HEK293 (cell line): ENCODE measurements at regions of chr9 and their contacts with region 1.

Region 1: GRCh38 chr9:68584189-68585033 is 43.7 kb upstream of the TMEM252 start:
- H3K4me3 ChIP-seq: no peak overlapping the region
- H3K27ac ChIP-seq: no peak overlapping the region
- H3K4me1 ChIP-seq: no peaks in the 10 kb centered on the region
- CTCF ChIP-seq: peak; percentile 74

Region 2: DNA sequence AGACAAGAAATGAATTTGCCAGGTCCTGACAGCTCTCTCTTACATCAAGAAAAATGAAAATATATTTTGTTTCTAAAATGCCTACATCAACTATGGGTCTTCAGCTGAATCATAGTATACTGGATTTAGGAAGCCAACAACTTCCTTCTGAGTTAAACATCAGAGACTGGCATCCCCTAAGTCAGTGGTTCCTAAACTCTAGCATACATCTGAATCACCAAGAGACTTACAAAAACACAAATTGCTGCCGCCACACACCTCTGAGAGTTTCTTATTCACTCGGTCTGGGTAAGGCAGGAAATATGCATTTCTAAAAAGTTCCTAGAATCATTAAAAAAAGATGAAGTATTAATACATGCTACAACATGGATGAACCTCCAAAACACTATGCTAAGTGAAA is 16.7 kb after region 1 on chr9:
- CTCF ChIA-PET with region 1: interaction called, 10 read pairs
- POLR2A ChIA-PET with region 1: no interaction called
- H3K4me3 ChIP-seq: no peak overlapping the region
- H3K27ac ChIP-seq: no peak overlapping the region
- H3K4me1 ChIP-seq: no peaks in the 10 kb centered on the region
- CTCF ChIP-seq: no peak

Region 3: DNA sequence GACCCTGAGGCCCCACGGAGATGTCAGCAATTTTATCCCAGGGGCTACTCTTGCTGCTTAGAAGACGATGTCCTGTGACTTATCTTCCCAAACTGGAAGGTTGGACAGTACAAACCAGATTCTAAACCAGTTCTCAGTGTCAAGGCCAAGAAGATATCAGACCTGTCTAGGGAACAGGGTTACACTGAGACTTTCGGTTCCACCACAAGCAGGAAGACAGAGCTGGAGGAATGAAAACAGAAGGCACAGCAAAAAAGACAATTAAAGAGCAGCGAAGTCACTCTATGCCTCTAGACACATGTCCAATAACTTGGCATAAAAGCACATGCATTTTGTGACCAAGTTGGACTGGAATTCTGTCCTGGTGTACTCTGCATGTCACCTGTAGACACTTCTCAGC is 29.7 kb after region 1 on chr9:
- CTCF ChIA-PET with region 1: no interaction called
- POLR2A ChIA-PET with region 1: no interaction called
- H3K4me3 ChIP-seq: no peak overlapping the region
- H3K27ac ChIP-seq: no peak overlapping the region
- H3K4me1 ChIP-seq: no peaks in the 10 kb centered on the region
- CTCF ChIP-seq: no peak

Region 4: DNA sequence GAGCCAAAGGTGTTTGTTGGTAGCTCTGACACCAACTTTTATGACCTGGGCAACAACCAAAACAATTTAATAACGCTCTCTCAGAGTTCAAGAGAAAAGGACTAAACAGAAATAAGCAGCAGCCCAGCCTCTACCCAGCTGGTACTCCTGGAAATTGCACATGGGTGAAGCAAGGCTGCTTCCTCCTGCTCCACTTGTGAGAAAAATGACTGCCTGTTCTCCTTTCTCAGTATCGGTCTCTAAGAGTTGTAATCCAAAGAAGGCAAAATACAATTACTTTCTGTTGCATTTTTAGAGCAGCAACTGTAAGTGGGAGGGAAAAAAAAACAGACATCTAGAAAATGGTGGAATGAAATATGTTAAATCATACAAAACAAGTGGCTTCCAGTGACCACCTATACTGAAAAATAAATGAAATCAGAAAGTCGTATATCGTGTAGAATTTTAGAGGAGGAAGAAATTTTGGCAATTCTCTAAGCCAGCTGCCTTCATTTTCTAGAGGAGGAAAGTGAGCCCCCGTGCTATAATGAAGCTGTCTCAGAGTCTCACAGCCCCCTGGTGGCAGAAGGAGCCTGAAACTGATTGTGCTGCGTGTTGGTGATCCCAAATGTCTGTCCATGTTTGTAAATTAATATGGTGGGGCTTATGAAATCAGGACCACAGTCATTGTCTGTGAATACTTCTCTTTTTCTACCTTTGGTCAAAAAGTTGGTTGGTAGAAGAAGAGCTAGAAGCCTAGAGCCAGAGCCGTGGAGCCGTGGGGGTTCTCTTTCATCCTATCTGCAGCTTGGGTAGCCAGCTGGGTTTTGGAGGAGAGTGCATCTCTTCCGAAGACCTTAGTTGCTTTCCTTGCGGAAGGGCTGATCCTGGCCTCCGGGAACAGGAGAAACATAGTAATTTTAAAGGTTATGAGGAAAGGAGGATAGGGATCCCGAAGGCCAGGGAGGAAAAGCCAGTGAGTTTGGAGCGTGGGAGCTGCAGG is 260.5 kb after region 1 on chr9:
- CTCF ChIA-PET with region 1: interaction called, 16 read pairs
- POLR2A ChIA-PET with region 1: no interaction called
- H3K4me3 ChIP-seq: no peak overlapping the region
- H3K27ac ChIP-seq: no peak overlapping the region
- H3K4me1 ChIP-seq: no peaks in the 10 kb centered on the region
- CTCF ChIP-seq: no peak

Region 5: GRCh38 chr9:68999393-69000105 is 415.1 kb after region 1 on chr9:
- CTCF ChIA-PET with region 1: interaction called, 71 read pairs
- POLR2A ChIA-PET with region 1: no interaction called
- H3K4me3 ChIP-seq: no peak overlapping the region
- H3K27ac ChIP-seq: no peak overlapping the region
- H3K4me1 ChIP-seq: no peaks in the 10 kb centered on the region
- CTCF ChIP-seq: peak; percentile 86